Gastrocnemius medialis (tissue), 4 donors: ENCODE measurements at regions of chr2 and their contacts with region 1.

Region 1: GRCh38 chr2:188291617-188292347 is at the start of gene GULP1:
- DNase-seq: peak; percentile 58 to 71
- ATAC-seq: peak; percentile 79 to 80
- H3K4me3 ChIP-seq: peak within 1 kb of the TSS; percentile 79 to 85 (median 82)
- H3K27ac ChIP-seq: peak within 1 kb of the TSS; percentile 88 to 90 (median 89)
- H3K4me1 ChIP-seq: peaks cover 20 to 28% of the 10 kb centered on the region in 2 donors
- H3K27me3 ChIP-seq: no peaks in the 10 kb centered on the region
- CTCF ChIP-seq: peak; percentile 35 to 75 (median 63)
- POLR2A ChIP-seq: peak; percentile 32 to 34
- total RNA-seq, gene GULP1: 7.3 to 16.4 (median 12.1) TPM

Region 2: GRCh38 chr2:187774551-187775071 is 517.2 kb before region 1 on chr2:
- in situ Hi-C with region 1: no loop called
- intact Hi-C with region 1: no loop called
- DNase-seq: no peak
- ATAC-seq: no peak
- H3K4me3 ChIP-seq: no peak overlapping the region
- H3K27ac ChIP-seq: no peak overlapping the region
- H3K4me1 ChIP-seq: no peaks in the 10 kb centered on the region
- H3K27me3 ChIP-seq: no peaks in the 10 kb centered on the region
- CTCF ChIP-seq: no peak
- POLR2A ChIP-seq: no peak

Region 3: GRCh38 chr2:187994464-187995331 is 297.1 kb before region 1 on chr2:
- in situ Hi-C with region 1: no loop called
- intact Hi-C with region 1: no loop called
- DNase-seq: no peak
- ATAC-seq: peak; percentile 39 to 46
- H3K4me3 ChIP-seq: no peak overlapping the region
- H3K27ac ChIP-seq: no peak overlapping the region
- H3K4me1 ChIP-seq: no peaks in the 10 kb centered on the region
- H3K27me3 ChIP-seq: no peaks in the 10 kb centered on the region
- CTCF ChIP-seq: no peak
- POLR2A ChIP-seq: no peak

Region 4: GRCh38 chr2:188326669-188327301 is 35.0 kb after region 1 on chr2:
- in situ Hi-C with region 1: no loop called
- intact Hi-C with region 1: loop called (anchors 5 kb)
- DNase-seq: no peak
- ATAC-seq: peak in 1 of 2 donors; percentile 56
- H3K4me3 ChIP-seq: no peak overlapping the region
- H3K27ac ChIP-seq: no peak overlapping the region
- H3K4me1 ChIP-seq: peaks cover 5 to 7% of the 10 kb centered on the region in 2 donors
- H3K27me3 ChIP-seq: no peaks in the 10 kb centered on the region
- CTCF ChIP-seq: no peak
- POLR2A ChIP-seq: no peak

Region 5: GRCh38 chr2:188369365-188369764 is 77.6 kb after region 1 on chr2:
- in situ Hi-C with region 1: no loop called
- intact Hi-C with region 1: loop called (anchors 1 kb)
- DNase-seq: peak in 1 of 2 donors; percentile 11
- ATAC-seq: peak; percentile 82 to 86
- H3K4me3 ChIP-seq: no peak overlapping the region
- H3K27ac ChIP-seq: no peak overlapping the region
- H3K4me1 ChIP-seq: no peaks in the 10 kb centered on the region
- H3K27me3 ChIP-seq: no peaks in the 10 kb centered on the region
- CTCF ChIP-seq: peak; percentile 40 to 69 (median 51)
- POLR2A ChIP-seq: no peak

Region 6: GRCh38 chr2:188512456-188512855 is 220.7 kb after region 1 on chr2:
- in situ Hi-C with region 1: no loop called
- intact Hi-C with region 1: loop called (anchors 10 kb)
- DNase-seq: no peak
- ATAC-seq: no peak
- H3K4me3 ChIP-seq: no peak overlapping the region
- H3K27ac ChIP-seq: no peak overlapping the region
- H3K4me1 ChIP-seq: no peaks in the 10 kb centered on the region
- H3K27me3 ChIP-seq: no peaks in the 10 kb centered on the region
- CTCF ChIP-seq: peak in 3 of 5 experiments; percentile 27 to 40 (median 29)
- POLR2A ChIP-seq: no peak

Region 7: GRCh38 chr2:188668017-188668680 is 376.4 kb after region 1 on chr2:
- in situ Hi-C with region 1: no loop called
- intact Hi-C with region 1: no loop called
- DNase-seq: no peak
- ATAC-seq: no peak
- H3K4me3 ChIP-seq: no peak overlapping the region
- H3K27ac ChIP-seq: no peak overlapping the region
- H3K4me1 ChIP-seq: no peaks in the 10 kb centered on the region
- H3K27me3 ChIP-seq: no peaks in the 10 kb centered on the region
- CTCF ChIP-seq: no peak
- POLR2A ChIP-seq: no peak